ENCODE measurements at regions of chr1 and their contacts with region 1.

Region 1: DNA sequence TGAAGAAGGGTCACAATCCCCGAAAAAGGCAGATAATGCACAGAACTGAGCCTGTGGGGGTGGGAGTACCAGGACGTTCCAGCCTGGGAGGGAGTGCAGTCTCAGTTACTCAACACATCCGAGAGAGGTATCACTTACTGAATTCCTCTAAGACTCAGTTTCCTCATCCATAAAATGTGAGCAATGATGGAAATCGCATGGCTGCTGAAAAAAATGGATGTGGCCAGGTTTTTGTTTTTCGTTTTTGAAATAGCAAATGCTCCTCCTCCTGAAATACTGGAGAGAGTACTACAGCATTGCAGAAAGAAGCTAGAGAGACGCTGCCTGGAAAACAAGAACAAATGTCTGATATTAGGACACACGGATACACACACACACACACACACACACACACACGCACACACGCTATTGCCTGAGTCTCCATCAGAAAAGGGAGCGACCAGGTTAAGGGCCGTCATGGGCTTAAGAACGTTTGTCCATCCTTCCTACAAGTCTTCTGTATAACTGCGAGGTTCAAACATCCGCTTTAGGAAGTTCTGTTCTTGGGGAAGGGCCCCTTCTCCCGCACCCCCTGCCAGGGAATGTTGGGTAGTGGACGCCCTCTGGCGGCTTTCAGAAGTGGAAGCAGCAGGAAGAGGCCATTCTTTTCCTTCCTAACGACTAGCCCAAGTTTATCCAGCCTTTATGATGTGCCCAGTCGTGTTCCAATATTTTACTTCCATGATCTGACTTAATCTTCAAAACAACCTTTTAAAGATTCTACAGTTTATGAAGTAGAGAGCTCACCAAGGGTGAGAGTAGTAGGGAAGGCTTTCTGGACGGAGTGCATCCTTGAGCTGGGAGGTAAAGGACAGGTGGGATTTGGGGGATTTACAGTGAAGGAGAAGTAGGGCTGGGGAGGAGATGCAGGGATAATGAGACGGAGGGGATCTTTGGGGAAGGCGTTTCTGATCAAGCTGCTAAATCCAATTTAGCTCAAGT is 699 bp upstream of the NES start:
- DNase-seq: peak in 1 of 2 donors; percentile 65
- ATAC-seq: peak; percentile 24 to 56 (median 44)
- H3K4me3 ChIP-seq: no peak overlapping the region
- H3K4me3 Mint-ChIP-seq: no peak overlapping the region
- H3K27ac ChIP-seq: no peak overlapping the region
- H3K27ac Mint-ChIP-seq: no peak overlapping the region
- H3K4me1 ChIP-seq: peaks cover 13% of the 10 kb centered on the region
- H3K4me1 Mint-ChIP-seq: peaks cover 5 to 17% of the 10 kb centered on the region in 2 donors
- H3K27me3 ChIP-seq: peaks cover 40% of the 10 kb centered on the region
- H3K27me3 Mint-ChIP-seq: peaks cover 47 to 49% of the 10 kb centered on the region in 2 donors
- CTCF ChIP-seq: peak; percentile 52

Region 2: DNA sequence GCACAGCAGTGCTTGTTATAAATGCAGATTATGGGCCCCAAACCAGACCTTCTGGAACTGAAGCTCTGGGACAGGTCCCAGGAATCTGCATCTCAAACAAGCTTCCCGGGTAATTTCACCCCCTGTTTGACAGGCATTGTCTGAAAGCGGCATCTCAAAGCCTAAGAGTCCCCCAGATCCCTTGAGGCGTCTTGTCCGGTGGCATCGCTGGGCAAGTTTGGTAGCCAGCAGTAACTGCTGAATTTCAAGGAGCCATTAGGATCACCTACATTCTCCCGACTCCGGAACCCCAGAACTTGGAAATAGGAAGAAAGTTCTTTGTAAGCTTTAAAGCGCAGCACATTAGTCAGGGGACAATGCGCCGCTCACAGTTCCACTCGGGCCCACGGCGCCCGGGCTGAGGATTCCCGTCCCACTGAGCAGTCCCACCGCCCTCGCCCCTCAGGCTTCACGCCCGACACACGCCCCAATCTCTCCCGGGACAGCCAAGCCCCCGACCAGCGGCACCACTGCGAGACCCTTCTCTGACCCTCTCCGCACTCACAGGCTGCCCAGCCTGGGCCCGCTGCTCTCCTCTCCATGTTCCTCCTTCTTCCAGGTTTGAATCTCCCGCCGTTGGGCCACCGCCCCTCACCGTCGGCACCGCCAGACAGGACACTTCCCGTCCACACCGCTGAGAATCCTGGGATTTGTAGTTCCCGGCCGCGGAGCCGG is 105.8 kb before region 1 on chr1 and contains the start of gene IQGAP3:
- intact Hi-C with region 1: no loop called
- DNase-seq: peak; percentile 35 to 83
- ATAC-seq: peak; percentile 73 to 84 (median 74)
- H3K4me3 ChIP-seq: no peak within 1 kb of the TSS
- H3K4me3 Mint-ChIP-seq: peak within 1 kb of the TSS; percentile 82
- H3K27ac ChIP-seq: no peak within 1 kb of the TSS
- H3K27ac Mint-ChIP-seq: peak within 1 kb of the TSS in 1 of 2 donors; percentile 13
- H3K4me1 ChIP-seq: peaks cover 11% of the 10 kb centered on the region
- H3K4me1 Mint-ChIP-seq: peaks cover 14 to 15% of the 10 kb centered on the region in 2 donors
- H3K27me3 ChIP-seq: peaks cover 21% of the 10 kb centered on the region
- H3K27me3 Mint-ChIP-seq: peaks cover 29 to 37% of the 10 kb centered on the region in 2 donors
- CTCF ChIP-seq: no peak
- total RNA-seq, gene IQGAP3: 0.08 to 0.21 (median 0.14) TPM

Region 3: DNA sequence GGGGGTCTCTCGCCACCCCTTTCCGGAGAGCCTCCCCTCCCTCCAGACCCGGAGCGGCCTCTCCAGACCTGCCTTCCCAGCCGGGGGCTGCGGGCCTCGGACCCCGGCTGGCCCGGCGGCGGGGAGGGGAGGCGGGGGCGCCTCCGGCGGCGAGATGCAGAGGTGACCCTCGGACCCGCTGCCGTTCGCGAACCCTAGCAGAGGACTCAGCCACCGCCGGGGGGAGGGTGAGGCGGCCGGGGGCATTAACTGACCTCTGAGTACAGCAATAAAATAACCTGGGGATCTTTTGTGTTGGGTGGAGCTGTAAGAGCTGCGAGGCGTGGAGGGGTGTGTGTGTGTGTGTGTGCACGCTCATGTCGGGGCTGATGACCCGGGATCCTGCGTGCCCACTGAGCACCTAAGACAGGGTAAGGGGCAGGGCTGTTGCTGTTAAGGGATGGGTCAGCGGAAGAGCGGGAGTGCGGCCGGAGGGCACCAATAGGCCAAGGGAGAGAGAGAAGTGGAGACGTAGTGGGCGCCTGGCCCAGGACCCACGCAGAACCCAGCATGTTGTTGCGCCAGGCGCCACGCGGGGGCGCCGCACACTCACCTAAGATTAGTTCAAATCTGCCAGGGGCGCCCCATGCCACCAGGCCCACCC is 52.3 kb before region 1 on chr1:
- intact Hi-C with region 1: loop called (anchors 5 kb)
- DNase-seq: peak; percentile 67 to 85
- ATAC-seq: peak; percentile 73 to 78 (median 77)
- H3K4me3 ChIP-seq: no peak overlapping the region
- H3K4me3 Mint-ChIP-seq: peak overlapping the region; percentile 83
- H3K27ac ChIP-seq: no peak overlapping the region
- H3K27ac Mint-ChIP-seq: no peak overlapping the region
- H3K4me1 ChIP-seq: peaks cover 23% of the 10 kb centered on the region
- H3K4me1 Mint-ChIP-seq: peaks cover 7 to 8% of the 10 kb centered on the region in 2 donors
- H3K27me3 ChIP-seq: peaks cover 30% of the 10 kb centered on the region
- H3K27me3 Mint-ChIP-seq: peaks cover 51 to 55% of the 10 kb centered on the region in 2 donors
- CTCF ChIP-seq: peak; percentile 91